ENCODE measurements at regions of chr22 and their contacts with region 1.

Region 1: GRCh38 chr22:22968366-22968765 is 80.8 kb downstream of the IGLL5 start:
- DNase-seq: no peak
- CTCF ChIP-seq: no peak

Region 2: GRCh38 chr22:22195265-22196017 is 772.9 kb before region 1 on chr22:
- in situ Hi-C with region 1: no loop called
- DNase-seq: peak; percentile 89
- CTCF ChIP-seq: peak; percentile 98

Region 3: DNA sequence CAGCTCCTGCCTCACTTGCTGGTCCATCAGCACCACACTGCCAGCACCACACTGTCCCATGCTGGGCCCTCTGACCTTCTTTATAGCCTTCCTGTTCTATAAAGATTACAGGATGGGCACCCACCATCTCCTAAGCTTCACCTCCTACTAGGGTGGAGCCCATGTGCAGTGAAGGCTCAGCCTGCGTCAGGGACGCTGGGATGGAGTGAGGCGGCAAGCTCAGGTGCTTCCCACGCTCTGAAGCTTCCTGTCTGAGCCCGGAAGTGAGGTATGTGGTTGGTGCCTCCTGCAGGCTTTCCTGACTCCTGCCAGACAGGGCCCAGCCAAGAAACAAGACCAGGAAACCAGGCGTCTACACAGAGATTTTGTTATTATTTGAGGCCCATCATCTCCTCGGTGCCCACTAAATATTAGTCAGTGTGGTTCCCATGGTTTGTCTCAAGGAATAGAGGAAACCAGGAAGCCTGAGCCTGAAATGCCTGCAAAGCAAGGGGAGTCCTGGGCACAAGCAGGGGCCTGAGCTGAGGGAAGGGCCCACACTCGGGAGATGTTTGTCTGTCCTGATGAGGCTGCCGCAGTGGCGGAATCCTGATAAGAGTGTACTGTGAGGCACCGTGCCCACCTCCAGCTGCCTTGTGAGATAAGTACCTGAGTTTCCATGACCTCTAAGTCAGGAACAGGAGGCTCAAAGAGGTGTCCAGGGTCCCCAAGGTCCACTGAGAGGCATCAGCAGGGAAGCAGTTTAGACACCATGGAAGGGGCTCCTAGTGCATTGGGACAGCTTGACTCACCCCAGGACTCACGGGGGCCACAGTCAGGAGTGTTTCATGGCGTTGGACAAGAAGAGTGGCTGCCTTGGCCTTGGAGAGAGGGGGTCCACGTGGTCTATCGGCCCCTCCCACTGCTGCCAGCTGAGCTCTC is 151.4 kb after region 1 on chr22:
- in situ Hi-C with region 1: loop called (anchors 5 kb)
- DNase-seq: peak; percentile 42
- CTCF ChIP-seq: no peak

Measured in GM13977 (cell line).